ENCODE measurements at regions of chr13 and their contacts with region 1.

Region 1: GRCh38 chr13:76473552-76474134 is 412.6 kb downstream of the KCTD12 start:
- DNase-seq: peak; percentile 84
- ATAC-seq: peak; percentile 93
- H3K4me3 Mint-ChIP-seq: no peak overlapping the region
- H3K27ac Mint-ChIP-seq: no peak overlapping the region
- H3K4me1 Mint-ChIP-seq: no peaks in the 10 kb centered on the region
- H3K27me3 Mint-ChIP-seq: peaks cover 4% of the 10 kb centered on the region

Region 2: DNA sequence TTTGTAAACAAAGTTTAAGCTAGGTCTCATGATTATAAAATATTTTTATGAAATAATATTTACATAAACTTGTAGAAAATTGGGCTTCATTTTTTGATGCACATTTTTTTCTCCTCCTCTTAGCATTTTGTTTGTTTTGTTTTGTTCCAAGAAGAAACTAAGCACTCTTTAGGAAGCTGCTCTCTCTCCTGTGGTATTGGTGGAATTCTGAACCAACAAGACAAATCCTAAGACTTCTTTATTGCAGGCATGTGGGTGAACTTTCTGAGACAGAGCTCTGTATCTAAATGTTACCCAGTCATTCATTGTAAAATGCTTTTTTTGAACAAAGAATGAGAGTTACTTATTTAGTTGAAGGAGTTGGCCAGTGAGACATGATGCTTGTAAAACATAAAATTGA is 798.2 kb before region 1 on chr13:
- CTCF ChIA-PET with region 1: no interaction called
- POLR2A ChIA-PET with region 1: no interaction called
- intact Hi-C with region 1: loop called in 1 of 2 experiments (anchors 1 kb)
- DNase-seq: no peak
- ATAC-seq: no peak
- H3K4me3 Mint-ChIP-seq: no peak overlapping the region
- H3K27ac Mint-ChIP-seq: no peak overlapping the region
- H3K4me1 Mint-ChIP-seq: no peaks in the 10 kb centered on the region
- H3K27me3 Mint-ChIP-seq: no peaks in the 10 kb centered on the region

Region 3: DNA sequence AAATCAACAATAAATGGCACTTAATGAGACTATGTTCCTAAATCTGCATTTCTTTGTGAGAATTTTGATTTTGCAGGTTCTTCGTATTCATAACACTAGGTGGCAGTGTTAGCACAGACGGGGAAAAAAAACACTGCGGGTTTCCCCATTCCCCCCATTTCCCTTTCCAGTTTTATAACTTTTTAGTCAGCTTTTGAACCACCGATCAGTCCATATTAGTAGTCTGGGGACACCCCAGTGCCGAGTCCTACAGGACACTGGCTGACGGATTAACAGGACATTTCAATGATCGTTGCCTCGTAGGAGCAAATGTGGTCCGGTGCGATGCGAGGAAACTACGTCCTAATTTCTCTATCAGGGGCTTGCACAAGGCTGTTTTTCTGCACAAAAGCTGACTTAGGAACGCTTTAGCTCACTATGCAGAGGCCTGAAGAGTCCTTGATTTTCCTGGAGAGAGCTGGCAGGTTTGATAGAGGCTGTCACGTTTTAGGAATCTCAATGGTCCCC is 603.2 kb before region 1 on chr13:
- CTCF ChIA-PET with region 1: interaction called, 34 read pairs
- POLR2A ChIA-PET with region 1: no interaction called
- intact Hi-C with region 1: no loop called
- DNase-seq: peak; percentile 10
- ATAC-seq: peak; percentile 27
- H3K4me3 Mint-ChIP-seq: no peak overlapping the region
- H3K27ac Mint-ChIP-seq: peak overlapping the region; percentile 58
- H3K4me1 Mint-ChIP-seq: peaks cover 19% of the 10 kb centered on the region
- H3K27me3 Mint-ChIP-seq: peaks cover 8% of the 10 kb centered on the region

Region 4: GRCh38 chr13:75876360-75877050 is 597.1 kb before region 1 on chr13:
- CTCF ChIA-PET with region 1: interaction called, 34 read pairs
- POLR2A ChIA-PET with region 1: no interaction called
- intact Hi-C with region 1: loop called (anchors 1 kb)
- DNase-seq: peak; percentile 71
- ATAC-seq: peak; percentile 90
- H3K4me3 Mint-ChIP-seq: no peak overlapping the region
- H3K27ac Mint-ChIP-seq: no peak overlapping the region
- H3K4me1 Mint-ChIP-seq: peaks cover 13% of the 10 kb centered on the region
- H3K27me3 Mint-ChIP-seq: peaks cover 3% of the 10 kb centered on the region

Region 5: GRCh38 chr13:76016799-76017400 is 456.7 kb before region 1 on chr13:
- CTCF ChIA-PET with region 1: no interaction called
- POLR2A ChIA-PET with region 1: no interaction called
- intact Hi-C with region 1: loop called in 1 of 2 experiments (anchors 5 kb)
- DNase-seq: peak; percentile 42
- ATAC-seq: peak; percentile 64
- H3K4me3 Mint-ChIP-seq: no peak overlapping the region
- H3K27ac Mint-ChIP-seq: no peak overlapping the region
- H3K4me1 Mint-ChIP-seq: no peaks in the 10 kb centered on the region
- H3K27me3 Mint-ChIP-seq: no peaks in the 10 kb centered on the region

Region 6: GRCh38 chr13:76440568-76440967 is 33.1 kb before region 1 on chr13:
- CTCF ChIA-PET with region 1: no interaction called
- POLR2A ChIA-PET with region 1: no interaction called
- intact Hi-C with region 1: no loop called
- DNase-seq: no peak
- ATAC-seq: no peak
- H3K4me3 Mint-ChIP-seq: no peak overlapping the region
- H3K27ac Mint-ChIP-seq: no peak overlapping the region
- H3K4me1 Mint-ChIP-seq: no peaks in the 10 kb centered on the region
- H3K27me3 Mint-ChIP-seq: peaks cover 2% of the 10 kb centered on the region

Region 7: DNA sequence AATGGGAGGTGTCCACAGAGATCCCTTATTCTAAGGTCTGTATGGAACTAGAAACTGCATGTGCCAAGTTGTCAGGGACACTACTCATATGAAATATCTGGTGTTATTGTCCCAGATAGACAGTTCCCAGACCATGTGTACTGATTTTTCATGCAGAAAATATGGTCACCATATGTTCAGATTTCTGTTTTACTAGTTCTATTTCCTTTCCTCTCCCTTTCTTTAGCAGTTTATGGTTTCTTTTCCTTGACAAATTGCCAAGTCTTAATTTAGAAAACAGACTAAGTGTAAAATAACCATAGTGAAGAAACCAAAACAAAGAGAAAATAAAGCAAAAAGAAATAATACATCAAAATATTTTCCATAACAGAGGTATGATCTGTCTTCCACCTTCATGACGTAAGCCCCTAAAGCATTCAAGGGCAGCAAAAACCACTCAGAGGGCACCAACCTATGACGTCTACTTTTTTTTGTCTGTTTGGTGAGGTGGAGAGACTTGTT is 164.0 kb after region 1 on chr13:
- CTCF ChIA-PET with region 1: no interaction called
- POLR2A ChIA-PET with region 1: no interaction called
- intact Hi-C with region 1: no loop called
- DNase-seq: no peak
- ATAC-seq: no peak
- H3K4me3 Mint-ChIP-seq: no peak overlapping the region
- H3K27ac Mint-ChIP-seq: no peak overlapping the region
- H3K4me1 Mint-ChIP-seq: no peaks in the 10 kb centered on the region
- H3K27me3 Mint-ChIP-seq: peaks cover 5% of the 10 kb centered on the region